ENCODE measurements at regions of chr10 and their contacts with region 1.

Region 1: GRCh38 chr10:58064714-58065528 is 202.8 kb downstream of the IPMK start:
- DNase-seq: peak in 1 of 2 experiments; percentile 75
- H3K4me3 ChIP-seq: no peak overlapping the region
- H3K4me3 Mint-ChIP-seq: no peak overlapping the region
- H3K27ac Mint-ChIP-seq: no peak overlapping the region
- H3K4me1 ChIP-seq: no peaks in the 10 kb centered on the region
- H3K4me1 Mint-ChIP-seq: no peaks in the 10 kb centered on the region
- H3K27me3 ChIP-seq: no peaks in the 10 kb centered on the region; the same call in 1 of the 2 replicates
- H3K27me3 Mint-ChIP-seq: peaks cover 13% of the 10 kb centered on the region
- CTCF ChIP-seq: peak; percentile 93 to 96

Region 2: DNA sequence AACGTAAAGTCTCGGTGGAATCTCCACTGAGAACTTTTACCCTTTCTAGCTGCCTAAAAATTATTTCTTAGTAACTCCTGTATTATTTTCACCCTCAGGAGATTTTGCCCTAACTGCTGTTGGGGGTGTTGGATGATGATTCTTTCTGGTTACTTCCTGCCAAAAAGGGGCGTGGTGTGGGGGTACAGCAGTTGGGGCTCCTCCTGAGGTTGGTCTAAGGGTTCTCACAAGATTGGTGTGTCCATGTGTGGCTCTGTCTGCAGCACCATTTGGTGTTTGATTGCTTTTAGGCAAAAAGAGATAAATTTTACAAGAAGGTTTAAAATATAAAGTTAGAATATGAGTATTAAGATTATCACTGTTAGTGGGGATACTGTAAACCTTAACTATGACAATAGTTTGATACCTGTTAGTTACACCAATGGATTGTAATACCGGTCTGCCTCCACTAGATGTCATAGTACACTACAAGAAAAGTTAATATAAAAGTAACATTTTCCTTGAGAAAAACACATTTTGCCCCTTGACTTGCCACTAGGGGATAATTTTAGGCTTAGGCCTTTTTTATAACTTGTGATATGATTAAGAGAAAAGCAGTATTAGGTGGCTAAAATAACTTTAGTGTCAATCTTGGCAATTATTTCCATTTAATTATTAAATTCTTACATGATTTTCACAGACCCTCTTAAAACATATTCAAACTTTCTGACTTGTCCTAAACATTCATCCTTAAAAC is 725.9 kb before region 1 on chr10:
- CTCF ChIA-PET with region 1: no interaction called
- POLR2A ChIA-PET with region 1: no interaction called
- intact Hi-C with region 1: loop called (anchors 1 kb)
- DNase-seq: peak in 1 of 2 experiments; percentile 64
- H3K4me3 ChIP-seq: no peak overlapping the region
- H3K4me3 Mint-ChIP-seq: no peak overlapping the region
- H3K27ac Mint-ChIP-seq: no peak overlapping the region
- H3K4me1 ChIP-seq: no peaks in the 10 kb centered on the region
- H3K4me1 Mint-ChIP-seq: no peaks in the 10 kb centered on the region
- H3K27me3 ChIP-seq: no peaks in the 10 kb centered on the region
- H3K27me3 Mint-ChIP-seq: no peaks in the 10 kb centered on the region
- CTCF ChIP-seq: peak; percentile 83 to 95

Region 3: DNA sequence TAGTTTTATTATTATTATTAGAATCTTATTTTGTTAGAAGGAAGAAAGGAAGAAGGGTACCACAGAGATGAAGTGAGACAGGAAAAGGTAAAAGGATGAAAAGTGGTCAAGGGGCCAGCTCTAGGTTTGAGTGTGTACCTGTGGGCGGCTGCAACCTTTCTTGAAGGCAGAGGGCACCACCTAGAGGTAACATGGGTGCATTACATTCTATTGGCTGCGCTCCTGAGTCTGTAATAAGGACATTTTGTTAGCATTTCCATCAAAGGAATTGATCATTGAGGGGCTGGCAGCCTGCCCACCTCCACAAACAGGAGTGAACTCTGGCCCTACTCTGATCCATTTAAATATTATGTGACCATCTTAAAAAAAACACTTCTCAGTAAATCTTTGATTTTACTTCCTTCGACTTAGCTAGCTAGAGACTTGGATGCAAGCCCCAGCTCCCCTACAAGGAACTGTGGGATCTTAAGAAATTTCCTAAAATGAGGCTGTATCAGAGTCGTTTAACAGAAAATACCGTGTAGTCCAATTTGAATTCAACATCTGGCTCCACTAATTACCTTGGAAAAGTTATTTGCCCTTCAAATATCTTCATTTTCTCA is 407.7 kb before region 1 on chr10:
- CTCF ChIA-PET with region 1: no interaction called
- POLR2A ChIA-PET with region 1: no interaction called
- intact Hi-C with region 1: loop called (anchors 1 kb)
- DNase-seq: peak; percentile 75 to 85
- H3K4me3 ChIP-seq: no peak overlapping the region
- H3K4me3 Mint-ChIP-seq: no peak overlapping the region
- H3K27ac Mint-ChIP-seq: no peak overlapping the region
- H3K4me1 ChIP-seq: no peaks in the 10 kb centered on the region
- H3K4me1 Mint-ChIP-seq: no peaks in the 10 kb centered on the region
- H3K27me3 ChIP-seq: no peaks in the 10 kb centered on the region
- H3K27me3 Mint-ChIP-seq: peaks cover 5% of the 10 kb centered on the region
- CTCF ChIP-seq: peak; percentile 97

Region 4: GRCh38 chr10:57785546-57786284 is 279.2 kb before region 1 on chr10:
- CTCF ChIA-PET with region 1: no interaction called
- POLR2A ChIA-PET with region 1: no interaction called
- intact Hi-C with region 1: loop called (anchors 5 kb)
- DNase-seq: peak; percentile 47 to 69
- H3K4me3 ChIP-seq: no peak overlapping the region
- H3K4me3 Mint-ChIP-seq: no peak overlapping the region
- H3K27ac Mint-ChIP-seq: peak overlapping the region; percentile 34
- H3K4me1 ChIP-seq: peaks cover 32% of the 10 kb centered on the region
- H3K4me1 Mint-ChIP-seq: peaks cover 19% of the 10 kb centered on the region
- H3K27me3 ChIP-seq: no peaks in the 10 kb centered on the region
- H3K27me3 Mint-ChIP-seq: no peaks in the 10 kb centered on the region
- CTCF ChIP-seq: no peak

Region 5: GRCh38 chr10:57864765-57865676 is 199.9 kb before region 1 on chr10:
- CTCF ChIA-PET with region 1: no interaction called
- POLR2A ChIA-PET with region 1: no interaction called
- intact Hi-C with region 1: loop called (anchors 1 kb)
- DNase-seq: peak; percentile 85 to 86
- H3K4me3 ChIP-seq: no peak overlapping the region
- H3K4me3 Mint-ChIP-seq: peak overlapping the region; percentile 36
- H3K27ac Mint-ChIP-seq: peak overlapping the region; percentile 86
- H3K4me1 ChIP-seq: peaks cover 29% of the 10 kb centered on the region
- H3K4me1 Mint-ChIP-seq: peaks cover 27% of the 10 kb centered on the region
- H3K27me3 ChIP-seq: no peaks in the 10 kb centered on the region
- H3K27me3 Mint-ChIP-seq: no peaks in the 10 kb centered on the region
- CTCF ChIP-seq: no peak